Activated CD8-positive, alpha-beta T cell treated with anti-CD3 and anti-CD28 coated beads, Interleukin-2, amount 10 ng/mL, durations not matched to agents 7 days and 5 days (primary cell): ENCODE measurements at regions of chr19 and their contacts with region 1.

Region 1: DNA sequence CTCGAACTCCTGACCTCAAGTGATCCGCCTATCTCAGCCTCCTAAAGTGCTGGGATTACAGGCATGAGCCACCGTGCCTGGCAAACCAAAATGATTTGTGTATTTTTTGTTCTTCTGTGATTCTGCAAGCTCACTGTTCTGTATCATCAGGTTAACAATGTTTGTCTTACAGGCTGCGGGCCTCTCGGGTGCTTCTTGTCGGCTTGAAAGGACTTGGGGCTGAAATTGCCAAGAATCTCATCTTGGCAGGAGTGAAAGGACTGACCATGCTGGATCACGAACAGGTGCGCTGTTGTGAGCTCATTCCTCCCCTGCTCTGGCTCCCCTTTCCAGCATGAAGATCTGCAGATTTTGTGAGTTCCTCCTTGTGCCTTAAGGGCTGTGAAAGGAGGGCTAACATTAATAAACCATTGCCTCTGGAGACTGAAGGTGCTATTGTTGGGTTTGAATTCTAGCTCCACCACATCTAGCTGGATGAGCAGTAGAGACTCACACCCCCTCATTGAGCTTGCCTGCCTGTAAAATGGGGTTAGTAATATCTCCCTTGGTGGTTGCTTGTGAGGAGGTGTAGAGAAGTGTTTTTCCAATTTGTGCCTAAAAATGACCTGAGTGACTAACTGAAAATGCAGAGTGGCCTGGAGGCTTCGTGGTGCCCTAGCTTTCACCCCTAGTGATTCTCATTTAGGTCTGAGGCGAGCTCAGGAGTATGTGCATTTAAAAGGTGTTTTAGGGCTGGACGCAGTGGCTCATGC is 12.9 kb downstream of the SAE1 start:
- DNase-seq: no peak
- ATAC-seq: no peak
- H3K4me3 Mint-ChIP-seq: no peak overlapping the region
- H3K27ac Mint-ChIP-seq: peak overlapping the region; percentile 26
- H3K4me1 Mint-ChIP-seq: peaks cover 56% of the 10 kb centered on the region
- H3K27me3 Mint-ChIP-seq: no peaks in the 10 kb centered on the region

Region 2: DNA sequence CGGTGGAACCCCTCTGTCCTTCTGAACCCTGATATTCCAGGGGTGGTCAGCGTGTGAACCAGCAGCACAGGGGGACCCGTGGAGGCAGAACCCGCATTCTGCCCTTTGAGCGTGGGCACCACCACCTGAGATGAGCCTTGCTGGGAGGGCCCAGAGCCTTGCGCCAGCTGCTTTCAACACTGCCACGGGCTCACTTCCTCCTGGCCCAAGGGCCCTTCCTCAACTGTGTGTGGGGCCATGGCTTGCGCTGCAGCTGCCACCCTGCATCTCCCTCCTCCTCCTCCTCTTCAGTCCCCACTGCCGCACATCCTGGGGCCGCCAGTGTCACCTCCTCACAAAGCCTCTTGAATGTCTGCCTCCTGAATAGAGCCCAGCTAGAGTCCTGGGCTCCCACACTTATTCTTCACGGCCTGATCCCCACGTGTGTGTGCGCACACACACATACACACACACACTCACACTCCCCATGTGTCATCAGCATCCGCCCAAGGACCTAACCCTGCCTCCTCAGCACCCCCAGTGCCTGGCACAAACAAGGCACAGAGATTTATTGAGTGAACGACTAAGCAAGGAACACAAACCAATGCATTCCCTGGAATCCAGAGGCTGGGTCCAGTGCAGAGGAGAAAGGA is 68.2 kb before region 1 on chr19:
- CTCF ChIA-PET with region 1: interaction called, 10 read pairs
- POLR2A ChIA-PET with region 1: interaction called, 3 read pairs
- DNase-seq: no peak
- ATAC-seq: no peak
- H3K4me3 Mint-ChIP-seq: no peak overlapping the region
- H3K27ac Mint-ChIP-seq: peak overlapping the region; percentile 22
- H3K4me1 Mint-ChIP-seq: peaks cover 9% of the 10 kb centered on the region
- H3K27me3 Mint-ChIP-seq: no peaks in the 10 kb centered on the region

Region 3: DNA sequence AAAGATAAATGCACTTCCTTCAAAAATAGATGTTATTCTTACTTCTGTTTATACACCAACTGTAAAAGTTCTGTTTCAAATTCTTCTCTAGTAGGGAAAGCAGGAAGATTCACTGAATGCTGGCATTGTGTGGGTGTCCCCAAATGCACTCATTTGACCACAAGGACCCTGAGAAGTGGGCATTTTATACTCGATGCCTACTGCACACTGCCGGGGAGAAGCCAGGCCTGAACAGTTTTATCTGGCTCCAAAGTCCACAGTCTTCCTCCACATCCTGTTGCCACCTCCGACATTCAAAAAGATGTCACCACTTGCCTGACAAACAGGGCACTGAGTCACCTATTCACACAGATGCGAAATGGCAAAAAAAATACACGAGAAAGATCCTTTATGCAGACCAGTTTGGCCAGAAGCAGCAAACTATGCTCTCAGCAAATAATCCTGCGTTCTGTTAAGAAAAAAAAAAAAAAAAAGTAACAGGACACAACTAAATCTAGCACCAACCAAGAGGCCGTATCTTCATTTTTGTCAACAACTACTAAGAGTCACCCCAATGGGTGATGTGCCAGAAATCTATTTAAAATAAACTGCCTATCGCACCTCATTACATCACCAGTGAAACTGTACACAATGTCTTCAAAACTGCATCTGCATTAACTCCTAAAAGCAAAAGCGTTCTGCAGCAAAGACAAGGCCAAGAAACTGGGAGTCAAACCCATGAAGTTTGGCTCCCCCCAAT is 36.1 kb before region 1 on chr19:
- CTCF ChIA-PET with region 1: no interaction called
- POLR2A ChIA-PET with region 1: no interaction called
- DNase-seq: peak; percentile 62
- ATAC-seq: peak; percentile 22
- H3K4me3 Mint-ChIP-seq: peak overlapping the region; percentile 95
- H3K27ac Mint-ChIP-seq: peak overlapping the region; percentile 86
- H3K4me1 Mint-ChIP-seq: peaks cover 65% of the 10 kb centered on the region
- H3K27me3 Mint-ChIP-seq: no peaks in the 10 kb centered on the region

Region 4: GRCh38 chr19:47130591-47131227 is 12.8 kb before region 1 on chr19 and contains the start of gene SAE1:
- CTCF ChIA-PET with region 1: interaction called, 18 read pairs
- POLR2A ChIA-PET with region 1: interaction called, 7 read pairs
- DNase-seq: peak; percentile 94
- ATAC-seq: peak; percentile 91
- H3K4me3 Mint-ChIP-seq: peak within 1 kb of the TSS; percentile 99
- H3K27ac Mint-ChIP-seq: peak within 1 kb of the TSS; percentile 98
- H3K4me1 Mint-ChIP-seq: peaks cover 51% of the 10 kb centered on the region
- H3K27me3 Mint-ChIP-seq: no peaks in the 10 kb centered on the region
- total RNA-seq, gene SAE1: 165 to 175 TPM